Activated CD8-positive, alpha-beta T cell treated with anti-CD3 and anti-CD28 coated beads for 36 hours (primary cell): ENCODE measurements at regions of chr7 and their contacts with region 1.

Region 1: GRCh38 chr7:106225856-106226255 is 58.9 kb downstream of the NAMPT start:
- DNase-seq: no peak
- ATAC-seq: no peak
- H3K4me3 Mint-ChIP-seq: no peak overlapping the region
- H3K27ac Mint-ChIP-seq: no peak overlapping the region
- H3K4me1 Mint-ChIP-seq: peaks cover 5% of the 10 kb centered on the region
- H3K27me3 Mint-ChIP-seq: peaks cover 26% of the 10 kb centered on the region
- CTCF ChIP-seq: no peak

Region 2: GRCh38 chr7:106166655-106167342 is 59.1 kb before region 1 on chr7:
- CTCF ChIA-PET with region 1: interaction called, 10 read pairs
- POLR2A ChIA-PET with region 1: no interaction called
- intact Hi-C with region 1: no loop called
- DNase-seq: peak; percentile 53
- ATAC-seq: peak; percentile 75
- H3K4me3 Mint-ChIP-seq: no peak overlapping the region
- H3K27ac Mint-ChIP-seq: no peak overlapping the region
- H3K4me1 Mint-ChIP-seq: peaks cover 2% of the 10 kb centered on the region
- H3K27me3 Mint-ChIP-seq: peaks cover 1% of the 10 kb centered on the region
- CTCF ChIP-seq: peak; percentile 97